ENCODE measurements at regions of chr21 and their contacts with region 1.

Region 1: DNA sequence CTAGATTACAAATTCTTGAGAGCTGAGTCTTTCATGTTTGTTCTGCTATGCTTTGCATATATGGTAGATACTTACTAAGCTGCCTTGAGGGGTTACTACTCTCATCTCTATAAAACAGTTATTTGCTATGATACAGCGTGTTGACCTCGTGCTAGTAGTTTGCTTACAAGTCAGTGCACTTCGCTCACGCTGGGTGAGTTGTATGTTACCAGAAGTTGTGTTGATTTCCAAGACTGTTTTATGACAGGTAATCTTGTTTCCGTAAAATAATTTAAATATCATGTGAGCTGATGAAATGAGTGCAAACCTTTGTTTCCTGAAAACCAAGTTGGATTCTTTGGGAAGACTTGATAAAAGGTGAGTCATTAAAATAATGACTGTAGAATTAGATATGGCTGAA is 7.3 kb downstream of the MRPS6 start:
- DNase-seq: peak in 1 of 2 donors; percentile 44
- ATAC-seq: peak; percentile 65

Region 2: GRCh38 chr21:34202553-34203372 is 122.1 kb after region 1 on chr21:
- intact Hi-C with region 1: loop called in 1 of 2 experiments (anchors 5 kb)
- DNase-seq: no peak
- ATAC-seq: no peak

Region 3: GRCh38 chr21:34276711-34277425 is 196.2 kb after region 1 on chr21:
- intact Hi-C with region 1: no loop called
- DNase-seq: no peak
- ATAC-seq: no peak

Measured in left colon (tissue), 2 donors.